ENCODE measurements at regions of chr7 and their contacts with region 1.

Region 1: DNA sequence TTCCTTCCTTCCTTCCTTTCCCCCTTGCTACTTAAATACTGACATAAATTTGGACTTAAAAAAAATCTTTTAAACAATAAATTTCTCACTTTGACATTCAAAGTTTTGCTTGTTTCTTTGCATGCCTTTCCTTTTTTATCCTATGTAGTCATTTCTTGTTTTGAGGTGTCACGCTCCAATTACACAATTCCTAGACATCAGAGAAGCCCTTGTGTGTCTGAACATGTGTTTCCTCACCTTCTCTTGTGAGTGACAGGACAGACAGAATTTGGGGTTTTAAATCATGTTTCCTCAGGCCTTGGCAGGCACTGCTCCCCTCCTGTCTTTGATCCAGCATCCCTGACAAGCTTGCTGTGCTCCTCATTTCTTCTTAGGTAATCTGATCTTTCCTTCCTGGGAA is 91.3 kb downstream of the CYTH3 start:
- DNase-seq: no peak
- ATAC-seq: no peak
- H3K4me3 ChIP-seq: no peak overlapping the region
- H3K27ac ChIP-seq: no peak overlapping the region
- H3K4me1 ChIP-seq: peaks cover 3 to 36% (median 18%) of the 10 kb centered on the region in 12 donors
- H3K27me3 ChIP-seq: no peaks in the 10 kb centered on the region
- CTCF ChIP-seq: no peak
- POLR2A ChIP-seq: no peak

Region 2: DNA sequence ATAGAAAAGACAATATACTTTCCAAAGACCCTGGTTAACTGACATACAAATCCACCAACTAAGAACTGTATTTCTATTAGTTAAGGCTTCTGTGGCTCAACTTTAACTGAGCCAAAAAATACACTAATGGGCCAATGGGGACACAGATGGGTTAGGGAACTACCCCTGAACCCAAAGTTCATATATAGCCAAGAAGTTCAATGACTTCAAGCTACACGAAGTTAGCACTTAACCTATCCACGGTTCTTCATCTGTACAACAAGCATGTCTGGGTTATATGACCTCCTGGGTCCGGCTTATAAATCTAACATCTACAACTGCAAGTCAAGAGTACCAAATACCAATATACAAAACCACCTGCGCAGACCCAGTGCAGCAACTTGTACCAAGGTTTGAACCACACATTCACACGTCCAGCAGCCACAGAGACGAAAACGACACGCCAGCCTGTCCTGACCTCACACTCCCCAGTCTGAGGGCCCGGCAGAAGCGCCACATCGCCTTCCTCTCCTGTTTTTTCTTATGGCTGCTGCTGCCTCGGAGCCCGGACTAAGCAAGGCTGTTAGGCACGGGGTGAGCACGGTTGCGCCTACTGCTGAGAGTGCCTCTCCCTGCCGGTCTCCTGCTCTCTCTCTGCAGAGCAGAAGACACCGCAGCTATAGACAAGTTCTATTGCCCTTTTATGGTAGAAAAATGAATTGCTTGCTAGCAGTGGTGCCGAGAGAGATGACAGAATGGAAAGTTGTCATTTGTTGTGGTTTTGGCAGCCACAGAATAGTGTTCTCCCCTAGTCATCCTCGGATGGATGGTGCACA is 486.0 kb before region 1 on chr7:
- intact Hi-C with region 1: no loop called
- DNase-seq: peak; percentile 55 to 76 (median 68)
- ATAC-seq: peak; percentile 14 to 46 (median 24)
- H3K4me3 ChIP-seq: peak overlapping the region in 11 of 12 donors; percentile 5 to 47 (median 40)
- H3K27ac ChIP-seq: peak overlapping the region; percentile 76 to 93 (median 90)
- H3K4me1 ChIP-seq: peaks cover 19 to 100% (median 96%) of the 10 kb centered on the region in 12 donors
- H3K27me3 ChIP-seq: no peaks in the 10 kb centered on the region
- CTCF ChIP-seq: no peak
- POLR2A ChIP-seq: peak in 1 of 2 donors; percentile 91

Region 3: GRCh38 chr7:6218329-6218728 is 37.2 kb after region 1 on chr7:
- intact Hi-C with region 1: loop called in 3 of 10 experiments (anchors 5 to 10 kb)
- DNase-seq: no peak
- ATAC-seq: no peak
- H3K4me3 ChIP-seq: no peak overlapping the region
- H3K27ac ChIP-seq: peak overlapping the region in 1 of 12 donors; percentile 2
- H3K4me1 ChIP-seq: peaks cover 5 to 50% (median 31%) of the 10 kb centered on the region in 12 donors
- H3K27me3 ChIP-seq: no peaks in the 10 kb centered on the region
- CTCF ChIP-seq: peak in 1 of 12 donors; percentile 13
- POLR2A ChIP-seq: no peak